ENCODE measurements at regions of chr5 and their contacts with region 1.

Region 1: GRCh38 chr5:159987031-159987674 is 21.8 kb upstream of the TTC1 start:
- DNase-seq: peak; percentile 82
- ATAC-seq: peak; percentile 98
- H3K4me3 Mint-ChIP-seq: peak overlapping the region; percentile 40
- H3K27ac Mint-ChIP-seq: no peak overlapping the region
- H3K4me1 Mint-ChIP-seq: peaks cover 3% of the 10 kb centered on the region
- H3K27me3 Mint-ChIP-seq: peaks cover 26% of the 10 kb centered on the region
- CTCF ChIP-seq: peak; percentile 76

Region 2: GRCh38 chr5:159444441-159445082 is 542.6 kb before region 1 on chr5:
- CTCF ChIA-PET with region 1: interaction called, 29 read pairs
- POLR2A ChIA-PET with region 1: no interaction called
- intact Hi-C with region 1: loop called (anchors 2 kb)
- DNase-seq: no peak
- ATAC-seq: peak; percentile 37
- H3K4me3 Mint-ChIP-seq: no peak overlapping the region
- H3K27ac Mint-ChIP-seq: no peak overlapping the region
- H3K4me1 Mint-ChIP-seq: no peaks in the 10 kb centered on the region
- H3K27me3 Mint-ChIP-seq: peaks cover 7% of the 10 kb centered on the region
- CTCF ChIP-seq: peak; percentile 38

Region 3: GRCh38 chr5:159515909-159516415 is 471.2 kb before region 1 on chr5:
- CTCF ChIA-PET with region 1: interaction called, 15 read pairs
- POLR2A ChIA-PET with region 1: no interaction called
- intact Hi-C with region 1: no loop called
- DNase-seq: peak; percentile 82
- ATAC-seq: peak; percentile 99
- H3K4me3 Mint-ChIP-seq: no peak overlapping the region
- H3K27ac Mint-ChIP-seq: no peak overlapping the region
- H3K4me1 Mint-ChIP-seq: peaks cover 8% of the 10 kb centered on the region
- H3K27me3 Mint-ChIP-seq: peaks cover 7% of the 10 kb centered on the region
- CTCF ChIP-seq: peak; percentile 86

Region 4: DNA sequence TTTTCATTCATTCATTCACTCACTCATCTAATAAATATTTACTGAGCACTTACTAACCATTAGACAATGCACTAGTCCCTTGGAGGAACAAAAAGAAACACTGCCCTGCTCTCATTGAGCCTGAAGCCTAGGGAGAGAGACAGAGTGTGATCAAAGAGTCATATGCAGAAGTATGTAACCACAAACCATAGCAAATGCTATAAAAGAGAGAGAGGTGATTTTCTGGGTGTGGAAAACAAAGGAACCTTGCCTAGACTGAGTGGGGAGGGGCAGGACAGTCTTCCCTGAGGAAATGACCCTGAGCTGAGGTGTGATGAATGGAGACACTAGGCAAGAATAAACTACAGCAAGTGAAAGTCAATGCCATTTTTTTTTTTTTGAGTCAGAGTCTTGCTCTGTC is 81.7 kb before region 1 on chr5:
- CTCF ChIA-PET with region 1: no interaction called
- POLR2A ChIA-PET with region 1: no interaction called
- intact Hi-C with region 1: no loop called
- DNase-seq: no peak
- ATAC-seq: no peak
- H3K4me3 Mint-ChIP-seq: no peak overlapping the region
- H3K27ac Mint-ChIP-seq: no peak overlapping the region
- H3K4me1 Mint-ChIP-seq: peaks cover 4% of the 10 kb centered on the region
- H3K27me3 Mint-ChIP-seq: peaks cover 11% of the 10 kb centered on the region
- CTCF ChIP-seq: no peak

Region 5: GRCh38 chr5:159975462-159976019 is 11.6 kb before region 1 on chr5:
- CTCF ChIA-PET with region 1: interaction called, 27 read pairs
- POLR2A ChIA-PET with region 1: no interaction called
- intact Hi-C with region 1: no loop called
- DNase-seq: no peak
- ATAC-seq: no peak
- H3K4me3 Mint-ChIP-seq: no peak overlapping the region
- H3K27ac Mint-ChIP-seq: no peak overlapping the region
- H3K4me1 Mint-ChIP-seq: peaks cover 11% of the 10 kb centered on the region
- H3K27me3 Mint-ChIP-seq: peaks cover 46% of the 10 kb centered on the region
- CTCF ChIP-seq: no peak